A549 (cell line): ENCODE measurements at regions of chr10 and their contacts with region 1.

Region 1: GRCh38 chr10:45235798-45236231 is 79.6 kb downstream of the OR13A1 start:
- DNase-seq: no peak
- ATAC-seq: peak; percentile 44 to 46; a peak in 4 of 6 replicates
- H3K4me3 ChIP-seq: no peak overlapping the region
- H3K27ac ChIP-seq: 0 out of 6 replicates have a peak overlapping the region, but pooled peaks of 1 of the 2 experiments have one; percentile 3
- H3K4me1 ChIP-seq: peaks cover 3% of the 10 kb centered on the region; the same call in 1 of the 3 replicates
- CTCF ChIP-seq: no peak
- EP300 ChIP-seq: no peak
- POLR2A ChIP-seq: no peak
- RAD21 ChIP-seq: no peak

Region 2: DNA sequence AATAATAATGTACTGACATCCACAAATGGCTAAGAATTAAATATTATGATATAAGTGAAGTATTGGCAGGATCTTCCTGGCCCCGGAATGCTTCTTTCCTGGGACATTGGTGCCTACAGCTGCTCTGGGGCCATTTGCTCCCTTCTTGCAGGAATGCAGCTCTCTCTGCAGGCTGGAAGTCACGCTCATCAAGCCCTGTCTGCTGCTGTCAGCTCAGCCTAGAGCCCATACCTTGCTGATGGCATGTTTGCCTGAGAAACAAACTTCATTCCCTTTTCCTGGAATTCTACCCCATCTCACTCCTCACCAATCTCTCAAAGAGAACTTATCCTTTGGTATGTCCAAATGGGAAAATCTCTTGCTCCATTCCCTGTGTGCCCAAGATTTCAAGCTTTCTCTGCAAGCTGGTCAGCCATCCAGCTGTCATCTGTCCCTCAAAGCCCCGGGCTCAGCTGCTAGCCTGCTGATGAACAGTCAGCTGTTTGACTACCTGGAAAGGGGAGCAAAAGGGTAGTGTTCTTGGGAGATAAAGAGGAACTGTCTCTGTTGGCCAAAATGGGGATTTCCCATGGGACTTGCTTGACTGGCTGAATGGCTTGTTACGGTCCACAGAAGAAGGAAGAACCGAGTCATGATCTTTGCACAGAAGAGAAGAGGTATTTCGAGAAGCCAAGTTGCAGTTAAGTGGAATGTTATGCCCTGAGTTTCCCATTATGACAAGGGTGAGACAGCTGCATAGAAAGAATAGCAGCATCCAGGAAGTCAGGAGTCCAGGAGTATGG is 288.3 kb before region 1 on chr10:
- CTCF ChIA-PET with region 1: no interaction called
- POLR2A ChIA-PET with region 1: no interaction called
- DNase-seq: no peak
- ATAC-seq: no peak
- H3K4me3 ChIP-seq: no peak overlapping the region
- H3K27ac ChIP-seq: no peak overlapping the region
- H3K4me1 ChIP-seq: no peaks in the 10 kb centered on the region
- CTCF ChIP-seq: no peak
- EP300 ChIP-seq: no peak
- POLR2A ChIP-seq: no peak
- RAD21 ChIP-seq: no peak

Region 3: DNA sequence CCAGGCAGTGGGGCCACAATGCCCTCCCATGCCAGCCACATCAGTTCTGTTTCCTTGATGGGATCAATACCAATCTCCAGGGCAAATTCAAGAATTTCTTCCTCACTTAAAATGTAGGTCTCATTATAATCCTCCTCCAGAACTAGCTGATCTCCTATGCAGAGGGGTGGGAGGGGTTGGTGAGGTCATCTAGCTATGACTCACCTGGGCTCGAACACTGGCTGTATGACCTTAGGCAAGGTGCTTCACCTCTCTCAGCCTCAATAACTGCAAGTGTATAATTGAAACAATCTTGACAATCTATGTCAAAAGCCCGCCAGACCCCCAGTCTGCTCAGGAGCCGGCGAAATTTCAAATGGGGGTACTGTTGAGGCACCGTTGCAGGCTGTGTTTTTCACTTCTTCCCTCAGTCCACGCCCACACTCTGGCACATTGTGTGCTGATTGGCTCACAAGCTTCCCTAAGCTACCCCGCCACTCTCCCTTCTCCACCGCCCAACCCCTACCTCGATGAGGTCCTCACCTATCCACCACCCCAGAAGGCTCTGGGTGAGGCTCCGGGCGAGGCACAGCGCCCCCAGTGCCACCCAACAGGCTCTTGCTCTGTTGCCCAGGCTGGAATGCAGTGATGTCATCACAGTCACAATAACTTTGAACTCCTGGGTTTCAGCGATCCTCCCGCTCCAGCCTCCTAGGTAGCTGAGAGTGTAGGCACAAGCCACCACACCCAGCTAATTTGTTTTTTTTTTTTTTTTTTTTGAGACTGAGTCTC is 164.6 kb before region 1 on chr10:
- CTCF ChIA-PET with region 1: no interaction called
- POLR2A ChIA-PET with region 1: no interaction called
- DNase-seq: no peak
- ATAC-seq: no peak; a peak in 1 of 6 replicates
- H3K4me3 ChIP-seq: no peak overlapping the region
- H3K27ac ChIP-seq: no peak overlapping the region
- H3K4me1 ChIP-seq: no peaks in the 10 kb centered on the region
- CTCF ChIP-seq: no peak
- EP300 ChIP-seq: no peak
- POLR2A ChIP-seq: no peak
- RAD21 ChIP-seq: no peak

Region 4: GRCh38 chr10:45224219-45224841 is 11.5 kb before region 1 on chr10:
- CTCF ChIA-PET with region 1: interaction called, 36 read pairs
- POLR2A ChIA-PET with region 1: no interaction called
- DNase-seq: no peak
- ATAC-seq: no peak
- H3K4me3 ChIP-seq: no peak overlapping the region
- H3K27ac ChIP-seq: no peak overlapping the region
- H3K4me1 ChIP-seq: no peaks in the 10 kb centered on the region
- CTCF ChIP-seq: no peak
- EP300 ChIP-seq: no peak
- POLR2A ChIP-seq: no peak
- RAD21 ChIP-seq: no peak

Region 5: DNA sequence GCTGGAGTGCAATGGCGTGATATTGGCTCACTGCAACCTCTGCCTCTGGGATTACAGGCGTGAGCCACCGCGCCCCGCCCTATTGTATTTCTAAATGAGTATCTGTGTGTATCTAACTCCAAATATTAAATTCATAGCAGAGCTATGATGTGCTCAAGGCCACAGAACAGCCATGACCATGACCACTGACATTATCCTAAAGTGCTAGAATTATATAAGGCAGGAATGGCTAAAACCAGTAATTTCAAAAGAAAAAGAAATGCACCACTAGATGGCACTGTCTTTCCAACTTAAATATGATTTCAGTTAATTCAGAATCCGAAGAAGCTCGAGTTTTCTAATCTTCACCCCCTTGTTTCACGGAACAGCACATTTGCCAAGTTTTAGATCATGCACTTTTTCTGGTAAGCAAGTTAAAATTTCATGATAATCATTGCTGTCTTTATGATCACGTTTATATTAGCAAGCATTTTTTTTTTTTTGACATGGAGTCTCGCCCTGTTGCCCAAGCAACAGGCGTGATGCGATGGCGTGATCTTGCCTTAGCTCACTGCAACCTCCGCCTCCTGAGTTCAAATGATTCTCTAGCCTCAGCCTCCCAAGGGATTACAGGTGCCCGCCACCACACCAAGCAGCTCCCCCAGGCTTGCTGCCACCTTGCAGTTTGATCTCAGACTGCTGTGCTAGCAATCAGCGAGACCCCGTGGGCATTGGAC is 14.3 kb after region 1 on chr10:
- CTCF ChIA-PET with region 1: interaction called, 33 read pairs
- POLR2A ChIA-PET with region 1: no interaction called
- DNase-seq: peak; percentile 16 to 70
- ATAC-seq: peak; percentile 83 to 87
- H3K4me3 ChIP-seq: peak overlapping the region; percentile 31
- H3K27ac ChIP-seq: 0 out of 6 replicates have a peak overlapping the region, but pooled peaks of 1 of the 2 experiments have one; percentile 22
- H3K4me1 ChIP-seq: no peaks in the 10 kb centered on the region
- CTCF ChIP-seq: peak; percentile 75
- EP300 ChIP-seq: no peak
- POLR2A ChIP-seq: no peak
- RAD21 ChIP-seq: peak; percentile 67 to 77